A673 (cell line): ENCODE measurements at regions of chr3 and their contacts with region 1.

Region 1: GRCh38 chr3:49539659-49540560 is 14.4 kb upstream of the BSN start:
- DNase-seq: peak; percentile 73
- H3K4me3 ChIP-seq: peak overlapping the region; percentile 60
- H3K27ac ChIP-seq: no peak overlapping the region
- H3K4me1 ChIP-seq: no peaks in the 10 kb centered on the region
- H3K27me3 ChIP-seq: no peaks in the 10 kb centered on the region
- CTCF ChIP-seq: peak; percentile 72

Region 2: GRCh38 chr3:49566312-49566711 is 26.4 kb after region 1 on chr3:
- CTCF ChIA-PET with region 1: interaction called, 13 read pairs
- POLR2A ChIA-PET with region 1: no interaction called
- intact Hi-C with region 1: no loop called
- DNase-seq: no peak
- H3K4me3 ChIP-seq: no peak overlapping the region
- H3K27ac ChIP-seq: no peak overlapping the region
- H3K4me1 ChIP-seq: no peaks in the 10 kb centered on the region
- H3K27me3 ChIP-seq: no peaks in the 10 kb centered on the region
- CTCF ChIP-seq: peak; percentile 44; the same call in 1 of the 2 replicates

Region 3: DNA sequence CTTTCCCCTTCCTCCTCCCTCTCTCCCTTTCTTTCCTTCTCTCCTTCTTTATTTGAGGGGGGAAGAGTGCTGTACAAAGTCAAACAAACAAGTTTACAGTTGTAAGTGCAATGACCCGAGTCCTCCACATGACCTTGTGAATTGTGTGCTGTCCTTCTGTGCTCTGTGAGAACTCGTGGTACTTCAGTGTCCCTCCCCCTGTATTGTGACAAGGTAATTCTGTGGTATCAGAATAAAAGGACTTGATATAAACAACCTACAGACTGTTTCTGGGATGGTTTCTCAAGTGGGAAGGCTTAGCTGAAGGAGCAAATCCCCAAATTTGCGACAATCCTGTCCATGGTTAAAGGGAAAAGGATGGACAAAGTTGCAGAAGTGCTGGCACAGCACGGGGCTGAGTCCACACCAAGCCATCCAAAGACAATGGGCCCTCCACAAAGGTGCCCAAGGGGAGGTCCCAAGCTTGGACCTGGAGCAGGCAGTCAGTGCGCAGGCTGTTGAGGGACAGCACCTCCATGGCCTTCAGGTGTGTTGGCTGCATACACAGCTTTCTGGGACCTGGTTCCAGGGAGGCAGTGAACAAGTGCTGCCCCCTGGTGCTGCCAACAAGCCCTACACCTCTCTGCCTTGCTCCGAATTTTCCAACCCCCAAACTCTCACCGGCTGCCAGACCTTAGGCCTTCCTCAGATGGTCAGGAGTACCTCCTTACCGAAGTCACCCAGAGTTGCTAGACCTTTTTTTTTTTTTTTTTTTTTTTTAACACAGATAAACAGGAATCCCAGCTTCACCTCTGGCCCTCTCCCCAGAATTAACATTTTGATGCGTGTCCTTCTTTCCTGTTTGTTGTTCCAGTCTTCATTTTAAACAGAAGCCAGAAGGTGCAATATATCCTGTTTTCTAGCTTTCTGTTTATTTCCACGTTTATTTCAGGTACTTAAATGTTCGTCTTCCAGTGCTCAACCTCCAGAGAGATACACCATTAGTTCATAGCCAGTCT is 131.7 kb after region 1 on chr3:
- CTCF ChIA-PET with region 1: interaction called, 33 read pairs
- POLR2A ChIA-PET with region 1: interaction called, 19 read pairs
- intact Hi-C with region 1: loop called (anchors 1 kb)
- DNase-seq: peak; percentile 43
- H3K4me3 ChIP-seq: no peak overlapping the region
- H3K27ac ChIP-seq: no peak overlapping the region
- H3K4me1 ChIP-seq: no peaks in the 10 kb centered on the region
- H3K27me3 ChIP-seq: no peaks in the 10 kb centered on the region
- CTCF ChIP-seq: peak; percentile 66